CD8-positive, alpha-beta T cell (primary cell): ENCODE measurements at regions of chr20 and their contacts with region 1.

Region 1: GRCh38 chr20:45362804-45363610 is at the start of gene SYS1:
- DNase-seq: peak; percentile 97 to 99 (median 99)
- ATAC-seq: peak; percentile 86
- H3K4me3 ChIP-seq: peak within 1 kb of the TSS; percentile 91 to 99
- H3K4me3 Mint-ChIP-seq: peak within 1 kb of the TSS; percentile 100
- H3K27ac ChIP-seq: peak within 1 kb of the TSS; percentile 92 to 100
- H3K27ac Mint-ChIP-seq: peak within 1 kb of the TSS; percentile 100
- H3K4me1 ChIP-seq: peaks cover 33% of the 10 kb centered on the region
- H3K4me1 Mint-ChIP-seq: peaks cover 49% of the 10 kb centered on the region
- H3K27me3 ChIP-seq: no peaks in the 10 kb centered on the region
- H3K27me3 Mint-ChIP-seq: no peaks in the 10 kb centered on the region
- CTCF ChIP-seq: peak; percentile 89
- total RNA-seq, gene SYS1: 111 to 116 TPM

Region 2: DNA sequence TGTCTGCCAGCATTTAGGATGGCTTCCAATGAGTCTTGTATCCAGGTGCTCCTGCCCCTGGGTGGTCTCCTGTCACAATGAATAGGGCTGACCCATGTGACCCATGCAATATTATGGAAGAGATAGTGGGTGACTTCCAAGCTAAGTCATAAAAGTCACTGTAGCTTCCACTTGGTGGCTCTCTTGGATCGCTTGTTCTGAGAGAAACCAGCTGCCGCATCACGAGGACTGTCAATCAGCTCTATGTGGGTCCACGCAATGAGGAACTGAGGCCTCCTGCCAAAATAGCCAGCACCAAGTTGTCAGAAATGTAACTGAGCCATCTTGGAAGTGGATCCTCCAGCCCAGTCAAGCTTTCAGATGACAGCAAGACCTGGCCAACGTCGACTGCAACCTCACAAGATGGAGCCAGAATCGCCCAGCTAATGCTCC is 40.0 kb before region 1 on chr20:
- CTCF ChIA-PET with region 1: interaction called, 19 read pairs
- POLR2A ChIA-PET with region 1: interaction called, 3 read pairs
- intact Hi-C with region 1: loop called in 1 of 2 experiments (anchors 1 kb)
- DNase-seq: peak in 1 of 9 experiments; percentile 26
- ATAC-seq: no peak
- H3K4me3 ChIP-seq: no peak overlapping the region
- H3K4me3 Mint-ChIP-seq: no peak overlapping the region
- H3K27ac ChIP-seq: no peak overlapping the region
- H3K27ac Mint-ChIP-seq: no peak overlapping the region
- H3K4me1 ChIP-seq: peaks cover 26% of the 10 kb centered on the region
- H3K4me1 Mint-ChIP-seq: peaks cover 17% of the 10 kb centered on the region
- H3K27me3 ChIP-seq: no peaks in the 10 kb centered on the region
- H3K27me3 Mint-ChIP-seq: no peaks in the 10 kb centered on the region
- CTCF ChIP-seq: no peak

Region 3: DNA sequence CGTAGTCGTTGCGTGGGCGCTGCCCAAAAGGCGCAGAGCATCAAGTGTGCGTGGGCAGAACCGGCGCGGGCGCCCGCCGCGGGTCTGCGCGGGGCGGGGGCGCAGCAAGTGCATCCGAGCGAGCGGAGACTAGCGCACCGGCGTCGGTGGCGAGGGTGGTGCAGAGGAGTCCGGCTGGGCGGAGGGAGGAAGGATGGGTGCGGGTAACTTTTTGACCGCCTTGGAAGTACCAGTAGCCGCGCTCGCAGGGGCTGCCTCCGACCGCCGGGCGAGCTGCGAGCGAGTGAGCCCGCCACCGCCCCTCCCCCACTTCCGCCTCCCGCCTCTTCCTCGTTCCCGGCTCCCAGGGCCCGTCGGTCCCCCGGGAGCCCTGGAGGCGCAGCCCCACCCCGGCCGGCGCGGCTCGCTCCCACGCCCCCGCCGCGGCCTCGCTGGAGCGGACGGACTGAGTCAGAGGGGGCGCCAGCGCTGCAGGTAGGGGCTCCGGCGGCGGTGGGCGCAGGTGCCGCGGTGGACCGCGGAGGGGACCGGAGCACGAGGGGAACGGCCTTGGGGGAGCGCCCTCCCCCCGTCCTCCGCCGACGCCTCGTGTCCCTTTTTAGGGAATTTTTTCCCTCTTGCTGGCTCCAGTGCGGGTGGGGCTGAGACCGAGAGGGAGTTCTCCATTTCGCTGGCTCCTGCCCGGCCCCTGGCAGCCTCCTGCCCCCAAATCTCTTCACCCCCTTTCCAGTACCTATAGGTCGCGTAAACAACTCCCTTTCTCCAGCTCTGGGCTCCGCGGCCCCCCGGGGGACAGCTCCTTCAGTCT is 43.5 kb after region 1 on chr20:
- CTCF ChIA-PET with region 1: interaction called, 26 read pairs
- POLR2A ChIA-PET with region 1: interaction called, 10 read pairs
- intact Hi-C with region 1: loop called in 1 of 2 experiments (anchors 1 kb)
- DNase-seq: peak in 7 of 9 experiments; percentile 31 to 69 (median 46)
- ATAC-seq: peak; percentile 50
- H3K4me3 ChIP-seq: peak overlapping the region; percentile 66 to 73
- H3K4me3 Mint-ChIP-seq: peak overlapping the region; percentile 82
- H3K27ac ChIP-seq: peak overlapping the region; percentile 33 to 73
- H3K27ac Mint-ChIP-seq: peak overlapping the region; percentile 88
- H3K4me1 ChIP-seq: peaks cover 16% of the 10 kb centered on the region
- H3K4me1 Mint-ChIP-seq: peaks cover 23% of the 10 kb centered on the region
- H3K27me3 ChIP-seq: no peaks in the 10 kb centered on the region
- H3K27me3 Mint-ChIP-seq: no peaks in the 10 kb centered on the region
- CTCF ChIP-seq: no peak

Region 4: DNA sequence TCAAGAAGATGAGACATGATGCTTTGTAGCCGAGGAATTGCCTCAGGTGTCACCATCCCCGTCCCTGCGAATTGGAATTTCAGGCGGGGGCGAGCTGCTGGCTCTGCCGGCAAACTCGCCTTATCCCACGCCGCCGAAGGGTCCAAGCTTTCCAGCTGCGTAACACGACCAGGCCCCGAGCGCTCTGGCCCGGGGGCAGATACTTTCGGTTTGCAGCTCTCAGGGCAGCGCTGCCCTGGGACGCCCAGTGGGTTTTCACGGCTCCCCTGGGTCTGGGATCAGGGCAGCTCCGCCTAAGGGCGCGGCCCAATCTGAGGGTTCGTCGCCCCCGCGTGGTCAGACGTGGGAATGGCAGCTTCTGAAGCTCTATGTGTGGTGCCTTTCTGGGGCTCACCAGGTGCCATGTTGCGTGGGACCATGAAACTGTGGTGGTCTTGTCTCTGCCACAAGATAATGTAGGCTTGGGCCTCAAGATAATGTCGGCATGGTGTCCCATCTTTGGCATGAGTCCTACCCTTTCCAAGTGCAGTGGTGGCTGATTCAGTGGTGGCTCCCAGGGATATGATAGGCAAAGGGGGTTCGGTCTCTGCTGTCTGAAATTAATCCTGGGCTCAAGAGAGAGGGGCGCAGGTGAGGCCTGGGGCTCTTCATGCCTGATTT is 73.9 kb after region 1 on chr20:
- CTCF ChIA-PET with region 1: interaction called, 490 read pairs
- POLR2A ChIA-PET with region 1: interaction called, 39 read pairs
- intact Hi-C with region 1: loop called (anchors 1 kb)
- DNase-seq: peak; percentile 67 to 94 (median 90)
- ATAC-seq: peak; percentile 99
- H3K4me3 ChIP-seq: peak overlapping the region; percentile 56 to 60
- H3K4me3 Mint-ChIP-seq: peak overlapping the region; percentile 80
- H3K27ac ChIP-seq: peak overlapping the region in 1 of 2 experiments; percentile 53
- H3K27ac Mint-ChIP-seq: peak overlapping the region; percentile 32
- H3K4me1 ChIP-seq: peaks cover 15% of the 10 kb centered on the region
- H3K4me1 Mint-ChIP-seq: peaks cover 16% of the 10 kb centered on the region
- H3K27me3 ChIP-seq: no peaks in the 10 kb centered on the region
- H3K27me3 Mint-ChIP-seq: no peaks in the 10 kb centered on the region
- CTCF ChIP-seq: peak; percentile 84

Region 5: DNA sequence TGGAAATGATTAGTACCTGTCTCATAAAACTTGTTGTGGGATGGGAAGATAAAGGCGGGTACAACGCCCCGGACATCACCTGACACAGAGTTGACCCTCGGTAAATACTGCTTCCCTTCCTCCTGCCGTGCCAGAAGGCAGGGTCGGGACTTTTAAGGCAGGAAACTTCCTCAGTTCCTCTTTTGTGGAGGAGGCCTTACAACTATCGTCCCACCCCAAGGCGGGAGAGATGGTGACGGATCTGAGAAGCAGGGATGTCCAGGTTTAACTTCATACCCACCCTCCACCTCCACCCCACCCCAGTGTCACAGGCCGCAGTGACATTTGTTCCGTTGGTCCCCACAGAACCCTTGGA is 429.3 kb after region 1 on chr20:
- CTCF ChIA-PET with region 1: no interaction called
- POLR2A ChIA-PET with region 1: no interaction called
- intact Hi-C with region 1: loop called (anchors 5 kb)
- DNase-seq: peak in 3 of 9 experiments; percentile 8 to 20 (median 12)
- ATAC-seq: peak; percentile 10
- H3K4me3 ChIP-seq: peak overlapping the region; percentile 82 to 100
- H3K4me3 Mint-ChIP-seq: peak overlapping the region; percentile 93
- H3K27ac ChIP-seq: peak overlapping the region; percentile 87 to 96
- H3K27ac Mint-ChIP-seq: peak overlapping the region; percentile 93
- H3K4me1 ChIP-seq: peaks cover 16% of the 10 kb centered on the region
- H3K4me1 Mint-ChIP-seq: peaks cover 19% of the 10 kb centered on the region
- H3K27me3 ChIP-seq: no peaks in the 10 kb centered on the region
- H3K27me3 Mint-ChIP-seq: no peaks in the 10 kb centered on the region
- CTCF ChIP-seq: no peak

Region 6: DNA sequence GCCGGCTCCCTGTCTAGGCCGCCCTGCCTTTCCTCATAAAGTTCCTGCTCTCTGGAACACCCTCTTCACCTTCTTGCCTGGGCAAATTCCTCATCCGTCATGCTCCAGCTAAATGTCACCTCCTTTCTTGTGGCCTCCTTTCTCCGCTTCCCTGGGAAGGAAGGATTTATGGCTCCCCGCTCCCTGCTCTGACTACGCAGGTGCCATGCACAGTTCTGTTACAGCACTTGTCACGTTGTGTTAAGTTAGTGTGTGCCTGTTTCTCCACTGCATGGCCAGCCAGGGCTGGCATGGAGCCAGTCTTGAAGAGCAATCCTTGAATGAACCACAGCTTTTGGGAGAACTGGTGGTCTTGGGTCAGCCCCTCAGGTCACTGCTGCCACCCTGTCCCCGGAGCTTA is 816.9 kb after region 1 on chr20:
- CTCF ChIA-PET with region 1: no interaction called
- POLR2A ChIA-PET with region 1: no interaction called
- intact Hi-C with region 1: no loop called
- DNase-seq: no peak
- ATAC-seq: no peak
- H3K4me3 ChIP-seq: no peak overlapping the region
- H3K4me3 Mint-ChIP-seq: no peak overlapping the region
- H3K27ac ChIP-seq: no peak overlapping the region
- H3K27ac Mint-ChIP-seq: no peak overlapping the region
- H3K4me1 ChIP-seq: no peaks in the 10 kb centered on the region
- H3K4me1 Mint-ChIP-seq: peaks cover 4% of the 10 kb centered on the region
- H3K27me3 ChIP-seq: peaks cover 3% of the 10 kb centered on the region in 2 experiments
- H3K27me3 Mint-ChIP-seq: peaks cover 50% of the 10 kb centered on the region
- CTCF ChIP-seq: no peak

Region 7: GRCh38 chr20:47252879-47253307 is 1889.9 kb after region 1 on chr20:
- CTCF ChIA-PET with region 1: no interaction called
- POLR2A ChIA-PET with region 1: no interaction called
- intact Hi-C with region 1: no loop called
- DNase-seq: no peak
- ATAC-seq: no peak
- H3K4me3 ChIP-seq: no peak overlapping the region
- H3K4me3 Mint-ChIP-seq: no peak overlapping the region
- H3K27ac ChIP-seq: no peak overlapping the region
- H3K27ac Mint-ChIP-seq: no peak overlapping the region
- H3K4me1 ChIP-seq: no peaks in the 10 kb centered on the region
- H3K4me1 Mint-ChIP-seq: no peaks in the 10 kb centered on the region
- H3K27me3 ChIP-seq: no peaks in the 10 kb centered on the region
- H3K27me3 Mint-ChIP-seq: no peaks in the 10 kb centered on the region
- CTCF ChIP-seq: no peak